HCT116 (cell line): ENCODE measurements at regions of chr5 and their contacts with region 1.

Region 1: DNA sequence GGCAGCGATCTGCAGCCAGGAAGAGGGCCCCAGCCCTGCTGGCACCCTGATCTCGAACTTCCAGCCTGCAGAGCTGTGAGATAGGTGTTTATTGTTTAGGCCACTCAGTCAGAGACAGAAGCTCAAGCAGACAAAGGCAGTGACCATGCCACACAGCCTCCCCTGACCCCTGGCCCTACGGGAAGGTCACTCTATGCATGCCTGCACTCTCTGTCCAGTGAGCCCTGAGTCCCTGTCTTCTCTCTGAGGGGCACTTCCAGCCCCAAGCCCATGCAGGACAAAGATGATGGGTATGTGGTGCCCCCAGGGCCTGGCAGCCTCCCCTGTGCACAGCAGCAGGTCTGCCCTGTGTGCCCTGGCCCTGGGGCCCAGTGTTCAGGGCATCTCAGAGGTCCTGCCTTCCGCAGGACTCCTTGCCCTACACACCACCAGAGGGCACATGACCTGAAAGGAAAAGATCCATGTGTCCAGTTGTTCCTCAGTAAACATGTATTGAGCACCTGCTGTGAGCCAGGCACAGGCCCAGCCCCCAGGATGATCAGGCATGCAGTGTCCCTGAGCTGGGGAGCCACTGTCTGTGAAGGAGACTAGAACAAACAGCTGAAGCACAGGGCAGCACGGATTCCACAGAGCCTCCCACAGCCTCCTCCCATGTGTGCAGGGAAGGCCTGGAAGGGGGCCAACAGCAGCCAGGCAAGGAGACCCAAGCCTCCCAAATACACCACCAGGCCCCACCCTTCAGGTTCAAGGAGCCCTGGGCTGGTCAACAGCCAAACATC is 109.3 kb downstream of the ATPSCKMT start:
- DNase-seq: peak; percentile 13
- ATAC-seq: peak; percentile 94
- H3K4me3 ChIP-seq: no peak overlapping the region
- H3K27ac ChIP-seq: no peak overlapping the region
- H3K4me1 ChIP-seq: no peaks in the 10 kb centered on the region
- H3K27me3 ChIP-seq: no peaks in the 10 kb centered on the region
- CTCF ChIP-seq: peak; percentile 20 to 54 (median 47); a peak in 4 of 6 replicates
- POLR2A ChIP-seq: no peak
- RAD21 ChIP-seq: peak; percentile 21; the same call in 1 of the 2 replicates

Region 2: DNA sequence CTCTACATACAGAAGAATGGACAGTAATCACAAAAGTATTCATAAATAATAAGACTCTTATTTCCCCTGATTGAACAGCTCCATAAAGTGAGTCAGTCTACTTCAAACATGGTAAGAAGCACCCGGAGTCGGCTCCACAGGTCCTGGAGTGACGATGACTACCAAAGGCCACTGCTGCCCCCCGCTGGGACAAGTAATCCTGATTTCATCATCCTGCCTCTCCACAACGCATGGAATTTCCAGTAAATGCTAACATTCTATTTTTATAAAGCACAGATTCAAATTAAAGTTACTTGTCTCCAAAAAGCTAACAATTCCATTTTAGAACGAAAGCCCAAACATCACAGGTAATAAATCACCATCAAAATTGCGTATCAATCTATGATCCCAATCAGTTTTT is 93.1 kb after region 1 on chr5:
- CTCF ChIA-PET with region 1: interaction called, 3 read pairs
- POLR2A ChIA-PET with region 1: no interaction called
- RAD21 ChIA-PET with region 1: no interaction called
- intact Hi-C with region 1: loop called (anchors 5 kb)
- DNase-seq: peak; percentile 75
- ATAC-seq: peak; percentile 79
- H3K4me3 ChIP-seq: no peak overlapping the region
- H3K27ac ChIP-seq: peak overlapping the region; percentile 44
- H3K4me1 ChIP-seq: peaks cover 28 to 32% of the 10 kb centered on the region in 2 experiments
- H3K27me3 ChIP-seq: no peaks in the 10 kb centered on the region
- CTCF ChIP-seq: peak in 2 of 3 experiments; percentile 21 to 39; a peak in 2 of 6 replicates
- POLR2A ChIP-seq: no peak
- RAD21 ChIP-seq: peak; percentile 68